CD8-positive, alpha-beta T cell (primary cell): ENCODE measurements at regions of chr6 and their contacts with region 1.

Region 1: DNA sequence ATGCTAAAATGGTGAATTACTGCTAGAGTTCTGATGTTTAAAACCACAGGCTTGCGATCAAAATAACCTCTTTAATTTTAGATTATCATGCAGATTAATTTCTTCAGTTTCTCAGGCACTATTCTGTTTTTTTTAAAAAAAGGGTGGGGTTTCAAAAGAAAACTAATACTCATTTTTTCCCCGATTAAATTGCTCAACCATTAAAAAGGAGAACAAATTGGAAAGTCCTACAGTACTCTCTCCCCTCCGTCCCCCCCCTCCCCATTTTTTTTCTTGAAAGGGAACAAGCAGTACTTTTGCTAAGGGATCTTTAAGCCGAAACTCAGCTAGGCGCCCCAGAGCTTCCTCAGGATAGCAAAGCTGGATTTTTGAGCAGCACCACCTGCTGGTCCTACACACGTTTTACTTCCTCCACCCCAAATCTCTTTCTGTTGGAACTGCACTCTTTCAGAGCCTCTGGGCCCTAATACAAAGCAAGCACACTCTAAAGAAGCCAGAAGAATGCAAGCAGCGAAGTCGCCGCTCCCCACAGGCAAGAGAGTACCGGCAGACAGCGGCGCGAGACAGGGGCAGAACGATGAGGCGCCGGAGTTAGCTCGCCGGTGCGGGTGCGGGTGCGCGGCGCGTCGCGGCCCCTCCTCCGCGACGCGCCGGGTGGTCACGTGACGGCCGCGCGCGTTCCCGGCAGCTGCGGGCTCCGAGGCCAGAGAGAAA is at the start of gene RNF146:
- DNase-seq: peak; percentile 42 to 86 (median 70)
- ATAC-seq: peak; percentile 78
- H3K4me3 ChIP-seq: peak within 1 kb of the TSS; percentile 87 to 95
- H3K4me3 Mint-ChIP-seq: peak within 1 kb of the TSS; percentile 99
- H3K27ac ChIP-seq: peak within 1 kb of the TSS; percentile 89 to 94
- H3K27ac Mint-ChIP-seq: peak within 1 kb of the TSS; percentile 99
- H3K4me1 ChIP-seq: peaks cover 20% of the 10 kb centered on the region
- H3K4me1 Mint-ChIP-seq: peaks cover 37% of the 10 kb centered on the region
- H3K27me3 ChIP-seq: no peaks in the 10 kb centered on the region
- H3K27me3 Mint-ChIP-seq: peaks cover 1% of the 10 kb centered on the region
- CTCF ChIP-seq: peak; percentile 68
- total RNA-seq, gene RNF146: 7.2 to 8.9 TPM

Region 2: GRCh38 chr6:125301435-125302391 is 1964.6 kb before region 1 on chr6 and contains the start of gene HDDC2:
- CTCF ChIA-PET with region 1: no interaction called
- POLR2A ChIA-PET with region 1: no interaction called
- intact Hi-C with region 1: loop called in 1 of 2 experiments (anchors 5 kb)
- DNase-seq: peak in 8 of 9 experiments; percentile 27 to 67 (median 44)
- ATAC-seq: peak; percentile 43
- H3K4me3 ChIP-seq: peak within 1 kb of the TSS; percentile 65 to 70
- H3K4me3 Mint-ChIP-seq: peak within 1 kb of the TSS; percentile 82
- H3K27ac ChIP-seq: peak within 1 kb of the TSS; percentile 58 to 83
- H3K27ac Mint-ChIP-seq: peak within 1 kb of the TSS; percentile 88
- H3K4me1 ChIP-seq: peaks cover 39% of the 10 kb centered on the region
- H3K4me1 Mint-ChIP-seq: peaks cover 57% of the 10 kb centered on the region
- H3K27me3 ChIP-seq: no peaks in the 10 kb centered on the region
- H3K27me3 Mint-ChIP-seq: peaks cover 4% of the 10 kb centered on the region
- CTCF ChIP-seq: no peak
- total RNA-seq, gene HDDC2: 16.2 to 24.9 TPM

Region 3: DNA sequence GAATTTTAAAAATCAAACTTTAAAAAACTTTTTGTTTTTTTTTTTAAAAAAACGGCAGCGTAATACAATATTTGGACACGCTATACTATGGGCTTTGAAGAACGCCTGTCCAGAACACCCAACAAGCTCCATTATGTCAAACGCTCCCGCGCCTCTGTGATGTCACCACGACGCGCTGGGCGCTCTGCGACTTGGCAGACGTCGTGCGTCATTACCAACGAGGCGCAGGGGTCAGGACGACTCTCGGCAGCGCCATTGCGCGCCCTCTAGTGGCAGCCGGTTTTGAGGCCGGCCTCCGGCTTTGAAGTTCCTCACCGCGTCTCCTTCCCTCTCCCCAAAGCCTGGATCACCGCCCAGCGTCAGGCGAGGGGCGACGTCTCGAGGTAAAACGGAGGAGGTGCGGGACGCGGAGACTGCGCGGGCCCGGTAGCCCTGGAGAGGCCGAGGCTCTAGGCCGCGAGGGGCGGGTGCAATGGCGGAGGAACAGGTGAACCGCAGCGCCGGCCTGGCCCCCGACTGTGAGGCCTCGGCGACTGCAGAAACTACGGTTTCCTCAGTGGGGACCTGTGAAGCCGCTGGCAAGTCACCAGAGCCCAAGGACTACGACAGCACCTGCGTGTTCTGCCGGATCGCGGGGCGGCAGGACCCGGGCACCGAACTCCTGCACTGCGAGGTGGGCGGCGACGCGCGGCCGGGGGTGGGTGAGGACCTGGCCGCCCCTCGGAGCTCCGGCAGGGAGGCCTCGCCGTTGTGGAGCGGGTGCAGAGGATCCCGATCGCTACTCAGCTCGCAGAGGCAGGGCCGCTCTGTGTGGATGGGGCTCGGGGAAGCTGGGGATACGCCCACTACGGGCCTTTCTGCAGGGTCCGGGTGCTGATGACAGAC is 1309.6 kb before region 1 on chr6 and contains the start of gene HINT3:
- CTCF ChIA-PET with region 1: no interaction called
- POLR2A ChIA-PET with region 1: no interaction called
- intact Hi-C with region 1: loop called in 1 of 2 experiments (anchors 2 kb)
- DNase-seq: peak; percentile 95 to 99 (median 98)
- ATAC-seq: peak; percentile 88
- H3K4me3 ChIP-seq: peak within 1 kb of the TSS; percentile 79 to 93
- H3K4me3 Mint-ChIP-seq: no peak within 1 kb of the TSS
- H3K27ac ChIP-seq: peak within 1 kb of the TSS; percentile 97 to 98
- H3K27ac Mint-ChIP-seq: no peak within 1 kb of the TSS
- H3K4me1 ChIP-seq: peaks cover 26% of the 10 kb centered on the region
- H3K4me1 Mint-ChIP-seq: peaks cover 9% of the 10 kb centered on the region
- H3K27me3 ChIP-seq: no peaks in the 10 kb centered on the region
- H3K27me3 Mint-ChIP-seq: peaks cover 6% of the 10 kb centered on the region
- CTCF ChIP-seq: peak; percentile 96
- total RNA-seq, gene HINT3: 14.2 to 15.4 TPM

Region 4: DNA sequence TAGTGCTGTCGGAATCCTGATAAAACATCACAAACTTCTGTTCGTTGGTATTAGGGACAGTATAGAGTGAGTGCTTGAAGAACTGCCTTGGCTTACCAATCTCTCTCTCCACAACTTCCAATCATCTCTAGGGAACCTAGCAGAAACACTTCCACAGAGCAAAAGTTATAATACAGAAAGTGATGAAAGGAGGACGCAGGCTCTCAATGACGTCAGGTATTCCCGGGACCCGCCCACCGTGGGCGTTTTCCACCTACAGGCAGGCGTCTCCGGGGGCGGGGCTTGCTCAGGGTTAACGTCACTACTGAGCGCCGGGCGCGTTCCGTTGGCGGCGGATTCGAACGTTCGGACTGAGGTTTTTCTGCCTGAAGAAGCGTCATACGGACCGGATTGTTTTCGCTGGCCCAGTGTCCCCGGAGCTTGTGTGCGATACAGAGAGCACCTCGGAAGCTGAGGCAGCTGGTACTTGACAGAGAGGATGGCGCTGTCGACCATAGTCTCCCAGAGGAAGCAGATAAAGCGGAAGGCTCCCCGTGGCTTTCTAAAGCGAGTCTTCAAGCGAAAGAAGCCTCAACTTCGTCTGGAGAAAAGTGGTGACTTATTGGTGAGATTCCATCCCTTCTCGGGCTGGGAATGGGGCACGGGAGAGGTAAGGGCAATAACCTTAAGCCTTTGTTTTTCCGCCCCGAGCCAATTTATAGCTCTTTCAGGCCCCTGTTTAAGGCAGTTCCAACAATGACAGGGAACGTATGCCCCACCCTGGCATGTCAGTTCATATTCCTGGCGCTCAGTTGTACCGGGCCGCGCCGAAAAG is 926.3 kb before region 1 on chr6 and contains the start of gene CENPW:
- CTCF ChIA-PET with region 1: no interaction called
- POLR2A ChIA-PET with region 1: no interaction called
- intact Hi-C with region 1: loop called (anchors 5 kb)
- DNase-seq: peak; percentile 77 to 95 (median 90)
- ATAC-seq: peak; percentile 98
- H3K4me3 ChIP-seq: peak within 1 kb of the TSS; percentile 63 to 71
- H3K4me3 Mint-ChIP-seq: no peak within 1 kb of the TSS
- H3K27ac ChIP-seq: peak within 1 kb of the TSS in 1 of 2 experiments; percentile 28
- H3K27ac Mint-ChIP-seq: peak within 1 kb of the TSS; percentile 15
- H3K4me1 ChIP-seq: peaks cover 9% of the 10 kb centered on the region
- H3K4me1 Mint-ChIP-seq: peaks cover 11% of the 10 kb centered on the region
- H3K27me3 ChIP-seq: no peaks in the 10 kb centered on the region
- H3K27me3 Mint-ChIP-seq: no peaks in the 10 kb centered on the region
- CTCF ChIP-seq: no peak
- total RNA-seq, gene CENPW: 2.6 to 4.2 TPM

Region 5: GRCh38 chr6:127302728-127303660 is 36.7 kb after region 1 on chr6:
- CTCF ChIA-PET with region 1: interaction called, 8 read pairs
- POLR2A ChIA-PET with region 1: no interaction called
- intact Hi-C with region 1: loop called in 1 of 2 experiments (anchors 5 kb)
- DNase-seq: peak in 7 of 9 experiments; percentile 13 to 69 (median 45)
- ATAC-seq: peak; percentile 97
- H3K4me3 ChIP-seq: no peak overlapping the region
- H3K4me3 Mint-ChIP-seq: no peak overlapping the region
- H3K27ac ChIP-seq: no peak overlapping the region
- H3K27ac Mint-ChIP-seq: no peak overlapping the region
- H3K4me1 ChIP-seq: no peaks in the 10 kb centered on the region
- H3K4me1 Mint-ChIP-seq: peaks cover 43% of the 10 kb centered on the region
- H3K27me3 ChIP-seq: no peaks in the 10 kb centered on the region
- H3K27me3 Mint-ChIP-seq: no peaks in the 10 kb centered on the region
- CTCF ChIP-seq: peak; percentile 96

Region 6: GRCh38 chr6:127775371-127775770 is 509.0 kb after region 1 on chr6:
- CTCF ChIA-PET with region 1: no interaction called
- POLR2A ChIA-PET with region 1: no interaction called
- intact Hi-C with region 1: no loop called
- DNase-seq: no peak
- ATAC-seq: no peak
- H3K4me3 ChIP-seq: no peak overlapping the region
- H3K4me3 Mint-ChIP-seq: no peak overlapping the region
- H3K27ac ChIP-seq: no peak overlapping the region
- H3K27ac Mint-ChIP-seq: peak overlapping the region; percentile 76
- H3K4me1 ChIP-seq: peaks cover 10% of the 10 kb centered on the region
- H3K4me1 Mint-ChIP-seq: peaks cover 72% of the 10 kb centered on the region
- H3K27me3 ChIP-seq: no peaks in the 10 kb centered on the region
- H3K27me3 Mint-ChIP-seq: no peaks in the 10 kb centered on the region
- CTCF ChIP-seq: no peak

Region 7: DNA sequence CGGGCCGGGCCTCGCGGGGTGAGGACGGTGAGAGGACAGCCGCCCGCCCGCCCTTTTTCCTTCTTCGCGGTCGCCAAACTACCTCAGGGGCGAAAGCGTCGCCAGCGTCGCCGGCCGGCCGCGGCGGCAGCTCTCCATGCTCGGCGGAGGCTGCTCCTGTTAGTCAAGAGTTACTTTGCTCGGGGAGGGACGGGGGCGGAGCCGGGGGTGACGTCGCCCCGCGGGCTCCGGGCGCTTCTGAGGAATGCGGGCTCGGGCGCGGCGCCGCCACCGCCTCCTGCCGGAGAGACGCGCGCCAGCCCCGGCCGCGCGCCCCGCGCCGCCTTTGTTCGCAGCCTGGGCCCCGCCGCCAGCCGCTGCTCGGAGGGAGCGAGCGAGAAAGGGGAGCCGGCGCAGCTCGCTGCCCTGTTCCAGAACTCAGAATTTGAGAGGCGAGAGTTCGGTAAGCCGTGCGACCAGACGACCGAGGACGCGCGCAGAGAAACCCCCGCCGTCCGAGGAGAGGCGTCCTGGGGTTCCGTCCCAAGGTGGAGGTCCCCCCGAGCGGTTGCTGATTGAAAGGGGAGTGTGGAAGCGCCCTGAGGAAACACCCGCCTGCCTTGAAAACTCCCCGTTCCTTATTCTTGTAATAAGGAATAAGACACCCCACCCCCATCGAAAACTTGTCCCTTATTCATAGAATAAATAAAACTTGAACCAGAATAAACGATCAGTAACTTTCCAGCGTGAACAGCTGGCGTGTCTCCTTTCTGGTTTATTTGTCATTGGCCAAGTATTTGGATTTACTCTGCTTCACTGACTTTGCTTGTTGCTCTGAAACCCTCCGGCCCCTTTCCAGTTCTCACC is 1254.3 kb after region 1 on chr6 and contains the start of gene PTPRK:
- CTCF ChIA-PET with region 1: no interaction called
- POLR2A ChIA-PET with region 1: no interaction called
- intact Hi-C with region 1: loop called (anchors 2 to 10 kb)
- DNase-seq: peak; percentile 69 to 92 (median 89)
- ATAC-seq: peak; percentile 85
- H3K4me3 ChIP-seq: peak within 1 kb of the TSS; percentile 66 to 92
- H3K4me3 Mint-ChIP-seq: peak within 1 kb of the TSS; percentile 97
- H3K27ac ChIP-seq: peak within 1 kb of the TSS; percentile 17 to 61
- H3K27ac Mint-ChIP-seq: peak within 1 kb of the TSS; percentile 94
- H3K4me1 ChIP-seq: peaks cover 4% of the 10 kb centered on the region
- H3K4me1 Mint-ChIP-seq: peaks cover 19% of the 10 kb centered on the region
- H3K27me3 ChIP-seq: peaks cover 5 to 18% of the 10 kb centered on the region in 2 experiments
- H3K27me3 Mint-ChIP-seq: peaks cover 41% of the 10 kb centered on the region
- CTCF ChIP-seq: peak; percentile 44
- total RNA-seq, gene PTPRK: 17.2 to 18.6 TPM